ENCODE measurements at regions of chr9 and their contacts with region 1.

Region 1: GRCh38 chr9:124852829-124853531 is at the start of gene WDR38:
- DNase-seq: peak; percentile 92
- ATAC-seq: peak; percentile 90
- total RNA-seq, gene WDR38: not detected

Region 2: DNA sequence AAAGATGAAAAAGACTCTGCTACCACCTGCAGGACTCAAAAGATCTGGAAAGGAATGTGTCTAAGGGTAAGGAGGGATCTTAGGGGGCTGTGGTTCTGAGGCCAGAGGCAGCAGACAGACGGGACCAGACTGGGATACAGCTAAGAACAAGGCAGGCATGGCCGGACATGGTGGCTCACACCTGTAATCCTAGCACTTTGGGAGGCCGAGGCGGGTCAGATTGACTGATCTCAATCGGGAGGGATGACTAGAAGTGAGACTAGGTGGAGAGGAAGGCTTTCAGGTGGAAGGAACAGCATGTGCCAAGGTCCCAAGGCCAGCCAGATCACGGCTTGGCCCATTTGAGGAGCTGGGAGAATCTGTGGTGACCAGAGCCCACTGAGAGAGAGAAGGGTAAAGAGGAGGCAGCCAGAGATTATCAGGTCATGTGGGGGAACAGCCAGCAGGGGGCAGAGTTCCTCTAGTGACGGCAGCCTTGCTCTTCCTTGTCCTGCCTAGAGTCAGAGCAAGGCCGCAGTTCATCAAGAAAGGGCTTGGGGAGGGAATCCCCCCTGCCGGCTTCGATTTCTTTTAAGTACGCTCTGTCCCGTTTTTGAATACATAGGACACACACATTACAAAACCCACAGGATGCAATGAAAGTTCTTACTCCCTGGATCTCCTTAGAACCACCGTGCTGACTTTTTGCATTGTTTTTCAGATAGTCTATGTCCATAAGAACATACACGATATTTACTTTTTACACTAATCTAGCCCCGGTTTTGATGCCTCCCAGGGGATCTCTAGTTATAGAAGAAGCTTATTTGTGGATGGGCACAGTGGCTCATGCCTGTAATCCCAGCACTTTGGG is 78.6 kb before region 1 on chr9:
- intact Hi-C with region 1: loop called (anchors 1 kb)
- DNase-seq: peak; percentile 88
- ATAC-seq: peak; percentile 26

Region 3: DNA sequence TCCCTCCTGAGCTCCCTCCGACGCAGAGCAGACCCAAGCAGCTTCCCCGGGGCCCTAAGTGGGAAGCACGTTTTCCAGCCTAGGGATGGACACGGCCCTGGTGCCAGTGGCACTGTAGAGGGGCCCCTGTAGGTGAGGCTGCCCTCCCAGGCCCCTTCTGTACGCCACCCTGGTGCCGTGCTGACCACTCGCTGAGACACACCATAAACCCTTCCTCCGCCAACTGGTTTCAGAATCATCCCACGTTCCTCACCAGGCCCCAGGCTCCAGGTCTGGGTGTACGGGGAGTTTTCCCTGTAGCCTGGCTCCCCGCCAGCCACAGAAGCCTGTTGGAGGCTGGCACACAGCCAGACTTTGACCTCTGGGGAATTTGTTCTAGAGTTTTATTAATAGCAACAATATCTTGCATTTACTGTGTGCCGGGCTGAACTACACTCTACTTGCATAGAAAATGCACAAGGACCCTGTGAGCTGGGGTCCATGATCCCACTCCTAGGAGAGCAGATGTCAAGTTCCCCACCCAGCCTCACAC is 17.9 kb before region 1 on chr9:
- intact Hi-C with region 1: loop called (anchors 2 kb)
- DNase-seq: peak; percentile 88
- ATAC-seq: peak; percentile 59

Region 4: DNA sequence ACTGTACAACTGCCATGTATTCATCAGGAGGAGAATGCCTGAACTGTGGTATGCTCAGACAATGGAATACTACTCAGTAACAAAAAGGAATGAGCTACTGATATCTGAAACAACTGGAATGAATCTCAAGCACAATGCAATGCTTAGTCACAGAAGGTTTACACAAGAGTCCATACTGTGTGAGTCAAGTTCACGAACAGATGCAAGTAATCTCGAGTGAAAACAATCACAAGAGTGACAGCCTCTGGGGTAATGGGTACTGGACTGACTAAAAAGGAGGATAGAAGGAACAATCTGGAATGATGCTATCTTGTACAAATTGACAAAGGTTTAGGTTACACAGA is 107.4 kb after region 1 on chr9:
- intact Hi-C with region 1: no loop called
- DNase-seq: no peak
- ATAC-seq: no peak

Region 5: DNA sequence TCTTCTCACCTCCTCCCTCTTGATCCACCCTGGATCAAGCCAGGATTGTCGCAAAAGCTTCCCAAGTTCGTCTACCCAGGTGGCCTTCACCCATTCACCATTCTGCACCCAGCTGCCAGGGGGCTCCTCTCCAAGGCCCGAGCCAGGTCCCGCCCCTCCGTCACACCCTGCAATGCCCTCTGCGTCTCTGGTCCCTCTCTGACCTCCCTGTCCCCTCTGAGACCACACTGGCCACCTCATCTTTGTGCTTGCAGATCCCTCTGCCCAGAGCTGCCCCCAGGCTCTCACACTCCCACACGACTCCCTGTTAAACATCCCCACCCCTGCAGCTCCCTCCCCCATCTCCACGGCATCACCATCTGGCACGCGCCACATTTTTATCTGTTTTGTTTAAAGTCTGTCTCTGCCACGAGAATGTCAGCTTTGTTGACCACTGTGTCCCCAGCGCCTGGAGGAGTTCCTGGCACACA is 1137.8 kb after region 1 on chr9:
- intact Hi-C with region 1: no loop called
- DNase-seq: peak; percentile 18
- ATAC-seq: no peak